GM10248 (cell line): ENCODE measurements at regions of chr9 and their contacts with region 1.

Region 1: GRCh38 chr9:20250791-20251190 is 371.5 kb downstream of the MLLT3 start:
- DNase-seq: no peak
- CTCF ChIP-seq: no peak

Region 2: DNA sequence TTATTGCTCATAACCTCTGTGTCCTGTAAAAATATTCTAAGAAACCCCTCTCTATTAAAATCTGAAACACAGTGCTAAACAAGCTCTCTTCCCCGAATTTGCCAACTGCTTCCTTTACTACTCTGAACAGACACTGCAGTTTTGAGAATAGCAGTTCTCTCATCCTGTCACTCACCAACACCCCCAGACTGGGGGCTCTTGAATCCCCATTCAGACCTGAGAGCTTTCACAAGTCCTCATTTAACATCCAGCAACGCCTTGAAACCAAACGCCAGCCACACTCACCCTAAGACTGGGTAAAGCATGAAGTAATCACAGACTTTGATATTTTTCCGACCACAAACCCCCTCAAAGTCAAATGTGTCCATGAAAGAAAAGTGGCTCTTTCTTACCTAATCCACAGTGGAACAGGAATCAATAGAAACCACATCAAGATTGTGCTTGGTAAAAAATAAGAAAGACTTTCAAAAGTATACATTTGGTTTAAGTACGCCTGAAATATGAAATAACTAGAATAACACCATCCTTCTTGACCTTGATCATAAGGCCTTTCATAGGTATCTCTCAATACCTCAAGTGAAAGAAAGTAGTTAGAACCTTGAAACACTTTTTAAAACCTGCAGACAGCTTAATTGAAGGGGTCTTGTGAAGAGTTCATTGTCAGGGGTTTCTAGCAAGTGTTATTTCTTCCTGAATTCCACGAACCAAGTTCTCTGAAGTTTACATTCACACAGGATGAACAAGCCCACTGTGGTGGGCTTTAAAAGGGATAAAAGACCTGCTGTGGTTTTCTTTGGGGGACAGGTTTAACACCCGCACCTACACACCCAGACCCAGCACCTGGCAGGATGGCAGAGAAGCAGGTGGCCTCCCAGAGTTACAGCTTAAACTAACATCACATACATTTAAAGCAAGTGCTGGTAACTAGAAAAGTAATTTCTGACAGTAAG is 41.1 kb before region 1 on chr9:
- CTCF ChIA-PET with region 1: no interaction called
- POLR2A ChIA-PET with region 1: no interaction called
- DNase-seq: no peak
- CTCF ChIP-seq: no peak

Region 3: DNA sequence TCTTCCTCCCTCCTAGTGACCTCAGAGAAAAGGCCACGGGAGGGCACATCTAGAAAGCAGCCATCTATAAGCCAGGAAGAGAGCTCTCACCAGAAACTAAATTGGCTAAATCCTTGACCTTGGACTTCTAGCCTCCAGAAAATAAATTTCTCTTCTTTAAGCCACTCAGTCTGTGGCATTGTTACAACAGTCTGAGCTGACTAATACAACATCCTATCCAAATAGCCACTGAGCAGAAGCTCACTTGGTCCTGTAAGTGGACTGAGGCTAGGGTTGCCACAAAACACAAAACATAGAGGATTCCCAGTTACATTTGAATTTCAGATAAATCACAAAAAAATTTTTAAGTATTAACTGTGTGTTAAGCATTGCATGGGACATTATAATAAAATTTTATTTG is 11.9 kb before region 1 on chr9:
- CTCF ChIA-PET with region 1: interaction called, 11 read pairs
- POLR2A ChIA-PET with region 1: no interaction called
- DNase-seq: no peak
- CTCF ChIP-seq: no peak

Region 4: DNA sequence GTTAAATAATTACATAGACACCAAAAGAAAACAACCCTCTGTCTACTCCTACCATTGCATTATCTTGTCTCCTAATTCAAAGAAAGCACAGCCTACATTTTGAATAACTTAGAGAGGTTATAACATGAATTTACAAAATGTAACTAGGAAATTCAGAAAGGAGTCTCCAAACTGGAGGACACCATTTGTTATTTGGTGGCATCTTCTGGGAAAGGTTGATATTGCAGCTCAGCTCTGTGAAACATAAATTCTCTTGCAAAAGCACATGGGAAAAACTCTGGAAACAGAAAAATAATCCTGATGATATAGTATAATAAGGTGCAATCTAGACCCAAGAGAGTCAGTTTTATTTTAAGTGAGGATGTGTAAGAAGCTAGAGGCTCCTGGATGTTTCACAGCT is 156.2 kb after region 1 on chr9:
- CTCF ChIA-PET with region 1: no interaction called
- POLR2A ChIA-PET with region 1: no interaction called
- DNase-seq: no peak
- CTCF ChIP-seq: no peak